ENCODE measurements at regions of chr1 and their contacts with region 1.

Region 1: DNA sequence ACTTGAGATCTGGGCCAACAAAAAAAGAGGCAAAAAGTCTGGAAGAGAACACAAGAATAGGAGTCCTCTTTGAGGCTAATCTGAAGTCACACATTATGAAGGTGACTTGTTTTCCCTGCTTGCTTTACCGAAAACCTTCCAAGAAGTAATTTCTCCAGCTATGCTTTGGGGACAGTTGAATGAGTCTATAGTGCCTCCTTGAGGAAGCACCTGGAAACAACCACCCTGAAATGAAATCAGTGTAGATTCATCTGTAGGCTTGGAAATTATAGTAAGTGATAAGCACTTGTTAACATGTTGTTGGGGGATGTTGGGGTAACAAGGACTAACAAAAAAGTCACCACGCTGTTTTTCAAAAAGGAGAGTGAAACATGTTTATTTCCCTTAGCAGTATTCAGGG is 23.4 kb upstream of the RPTN start:
- DNase-seq: peak in 2 of 3 donors; percentile 43 to 44
- H3K4me3 ChIP-seq: no peak overlapping the region
- H3K4me3 Mint-ChIP-seq: no peak overlapping the region
- H3K27ac ChIP-seq: no peak overlapping the region
- H3K27ac Mint-ChIP-seq: no peak overlapping the region
- H3K4me1 ChIP-seq: no peaks in the 10 kb centered on the region
- H3K4me1 Mint-ChIP-seq: peaks cover 12% of the 10 kb centered on the region
- H3K27me3 ChIP-seq: no peaks in the 10 kb centered on the region
- H3K27me3 Mint-ChIP-seq: peaks cover 0 to 8% (median 1%) of the 10 kb centered on the region in 3 donors
- CTCF ChIP-seq: peak; percentile 90

Region 2: GRCh38 chr1:152141974-152142584 is 40.4 kb before region 1 on chr1:
- intact Hi-C with region 1: loop called (anchors 2 kb)
- DNase-seq: peak; percentile 44 to 67 (median 66)
- H3K4me3 ChIP-seq: no peak overlapping the region
- H3K4me3 Mint-ChIP-seq: no peak overlapping the region
- H3K27ac ChIP-seq: no peak overlapping the region
- H3K27ac Mint-ChIP-seq: no peak overlapping the region
- H3K4me1 ChIP-seq: no peaks in the 10 kb centered on the region
- H3K4me1 Mint-ChIP-seq: peaks cover 7% of the 10 kb centered on the region
- H3K27me3 ChIP-seq: peaks cover 16 to 18% of the 10 kb centered on the region in 2 donors
- H3K27me3 Mint-ChIP-seq: peaks cover 22 to 39% (median 23%) of the 10 kb centered on the region in 3 donors
- CTCF ChIP-seq: peak; percentile 83